ENCODE measurements at regions of chr22 and their contacts with region 1.

Region 1: DNA sequence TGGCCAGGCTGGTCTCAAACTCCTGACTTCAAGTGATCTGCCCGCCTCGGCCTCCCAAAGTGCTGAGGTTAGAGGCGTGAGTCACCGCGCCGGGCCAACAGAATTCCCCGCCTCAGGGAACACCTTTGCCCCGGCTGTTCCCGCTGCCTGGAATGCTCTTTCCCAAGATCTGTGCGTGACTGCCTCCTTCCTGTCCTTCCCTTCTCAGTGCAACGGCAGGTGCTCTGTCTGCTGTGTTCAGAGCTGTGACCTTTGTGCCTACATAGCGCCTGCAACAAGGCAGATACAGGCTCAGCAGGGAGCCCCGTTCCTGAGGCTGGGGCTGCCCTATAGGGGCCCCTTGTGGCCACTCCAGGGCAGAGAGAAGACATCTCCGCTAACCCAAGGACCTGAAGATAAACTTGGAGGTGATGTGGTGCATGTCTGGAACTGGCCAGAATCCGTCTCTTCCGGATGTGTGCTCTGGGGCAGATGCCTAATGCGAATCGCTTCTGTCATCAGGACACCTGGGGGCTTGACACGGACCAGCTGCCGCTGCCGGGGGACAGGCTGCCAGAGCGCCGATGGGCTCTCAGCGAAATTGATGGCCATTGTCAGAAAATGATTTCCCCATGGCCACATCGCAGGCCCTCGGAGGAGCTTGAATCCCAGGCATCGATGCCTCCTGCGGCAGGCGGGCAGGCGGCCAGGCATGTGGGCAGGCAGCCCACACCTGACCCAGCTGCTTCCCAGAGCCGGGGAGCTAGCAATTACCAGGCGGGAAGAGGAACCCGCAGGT is 43.5 kb upstream of the TCF20 start:
- DNase-seq: peak; percentile 72 to 78
- H3K4me3 ChIP-seq: no peak overlapping the region
- H3K27ac ChIP-seq: no peak overlapping the region
- H3K4me1 ChIP-seq: peaks cover 0 to 34% (median 19%) of the 10 kb centered on the region in 4 experiments; a peak in 5 of 7 replicates
- H3K27me3 ChIP-seq: no peaks in the 10 kb centered on the region; a peak in 2 of 7 replicates
- CTCF ChIP-seq: peak; percentile 72 to 77 (median 75)
- EP300 ChIP-seq: no peak
- POLR2A ChIP-seq: no peak
- RAD21 ChIP-seq: peak; percentile 79 to 86

Region 2: DNA sequence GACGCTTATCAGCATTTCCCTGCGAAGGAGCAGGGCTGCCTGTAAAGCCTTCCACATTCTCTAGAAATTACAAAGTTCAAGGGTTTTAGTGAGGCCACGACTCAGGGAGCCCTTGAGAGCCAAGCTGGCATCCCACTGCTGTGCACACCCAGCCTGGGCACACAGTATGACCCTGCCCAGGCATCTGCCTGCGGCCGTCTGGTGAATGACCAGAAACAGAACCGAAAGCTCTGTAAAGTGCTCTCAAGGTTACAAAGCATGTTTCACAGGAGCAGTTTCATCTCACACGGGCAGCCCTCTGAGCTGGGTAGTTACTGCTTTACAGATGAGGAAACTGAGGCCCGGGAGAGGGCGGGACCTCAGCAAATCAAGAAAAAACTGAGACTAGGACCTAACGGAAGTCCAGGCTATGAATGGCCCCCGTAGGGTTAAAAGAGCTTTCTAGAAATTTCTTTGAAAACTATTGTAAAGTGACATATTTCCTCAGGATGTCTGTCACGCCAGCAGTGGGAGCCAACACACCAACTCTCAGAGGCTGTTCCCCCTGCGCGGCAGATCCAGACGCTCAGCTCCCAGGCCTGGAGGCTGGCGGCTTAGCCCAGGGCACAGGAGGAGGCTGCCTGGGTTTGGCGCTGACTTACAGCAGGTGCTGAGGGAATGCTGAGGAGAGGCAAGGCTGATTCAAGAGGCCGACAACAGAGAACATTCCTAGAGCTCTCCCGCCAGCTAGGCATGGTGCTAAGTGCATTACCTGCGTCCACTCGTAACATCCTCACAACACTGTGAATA is 35.8 kb before region 1 on chr22:
- CTCF ChIA-PET with region 1: interaction called, 19 read pairs
- POLR2A ChIA-PET with region 1: no interaction called
- DNase-seq: no peak
- H3K4me3 ChIP-seq: no peak overlapping the region
- H3K27ac ChIP-seq: no peak overlapping the region
- H3K4me1 ChIP-seq: peaks cover 29 to 43% (median 30%) of the 10 kb centered on the region in 4 experiments
- H3K27me3 ChIP-seq: peaks cover 0 to 43% (median 27%) of the 10 kb centered on the region in 4 experiments; a peak in 5 of 7 replicates
- CTCF ChIP-seq: peak in 2 of 3 experiments; percentile 18 to 25; a peak in 2 of 4 replicates
- EP300 ChIP-seq: no peak
- POLR2A ChIP-seq: no peak
- RAD21 ChIP-seq: peak; percentile 58 to 67

Region 3: GRCh38 chr22:42303396-42304323 is 10.3 kb before region 1 on chr22:
- CTCF ChIA-PET with region 1: interaction called, 26 read pairs
- POLR2A ChIA-PET with region 1: interaction called, 13 read pairs
- DNase-seq: no peak
- H3K4me3 ChIP-seq: peak overlapping the region; percentile 10 to 53 (median 34); a peak in 6 of 8 replicates
- H3K27ac ChIP-seq: no peak overlapping the region
- H3K4me1 ChIP-seq: peaks cover 10 to 48% (median 34%) of the 10 kb centered on the region in 4 experiments
- H3K27me3 ChIP-seq: peaks cover 0 to 7% (median 6%) of the 10 kb centered on the region in 4 experiments; a peak in 4 of 7 replicates
- CTCF ChIP-seq: peak in 2 of 3 experiments; percentile 25 to 28; a peak in 2 of 4 replicates
- EP300 ChIP-seq: no peak
- POLR2A ChIP-seq: no peak
- RAD21 ChIP-seq: peak in 1 of 2 experiments; percentile 19; a peak in 1 of 4 replicates